ENCODE measurements at regions of chr17 and their contacts with region 1.

Region 1: GRCh38 chr17:6677158-6677831 is 25.7 kb downstream of the C17orf100 start:
- DNase-seq: peak in 3 of 5 donors; percentile 17 to 39 (median 21)
- H3K4me3 ChIP-seq: no peak overlapping the region
- H3K27ac ChIP-seq: no peak overlapping the region
- H3K4me1 ChIP-seq: no peaks in the 10 kb centered on the region
- H3K27me3 ChIP-seq: no peaks in the 10 kb centered on the region
- CTCF ChIP-seq: no peak

Region 2: DNA sequence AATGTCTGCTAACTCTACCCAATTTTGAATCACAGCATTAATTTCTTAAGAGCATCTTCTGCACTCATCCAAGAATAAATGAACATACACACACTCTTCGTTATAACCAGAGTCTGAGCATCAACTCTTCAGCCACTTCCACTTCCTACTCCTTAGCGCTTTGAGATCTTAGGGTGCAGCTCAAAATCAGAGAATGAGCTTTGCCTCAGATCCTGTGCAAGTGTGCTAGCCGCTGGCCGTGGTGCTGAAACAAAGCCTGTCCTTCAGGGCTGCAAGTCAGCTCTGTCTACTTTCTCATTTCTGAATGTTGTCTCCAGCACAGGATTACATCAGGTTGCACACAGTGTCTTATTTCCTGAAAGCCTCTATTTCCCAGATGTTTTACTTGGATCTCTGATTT is 407.8 kb before region 1 on chr17:
- intact Hi-C with region 1: no loop called
- DNase-seq: peak in 4 of 5 donors; percentile 64 to 90 (median 88)
- H3K4me3 ChIP-seq: no peak overlapping the region
- H3K27ac ChIP-seq: no peak overlapping the region
- H3K4me1 ChIP-seq: no peaks in the 10 kb centered on the region
- H3K27me3 ChIP-seq: no peaks in the 10 kb centered on the region
- CTCF ChIP-seq: no peak

Region 3: DNA sequence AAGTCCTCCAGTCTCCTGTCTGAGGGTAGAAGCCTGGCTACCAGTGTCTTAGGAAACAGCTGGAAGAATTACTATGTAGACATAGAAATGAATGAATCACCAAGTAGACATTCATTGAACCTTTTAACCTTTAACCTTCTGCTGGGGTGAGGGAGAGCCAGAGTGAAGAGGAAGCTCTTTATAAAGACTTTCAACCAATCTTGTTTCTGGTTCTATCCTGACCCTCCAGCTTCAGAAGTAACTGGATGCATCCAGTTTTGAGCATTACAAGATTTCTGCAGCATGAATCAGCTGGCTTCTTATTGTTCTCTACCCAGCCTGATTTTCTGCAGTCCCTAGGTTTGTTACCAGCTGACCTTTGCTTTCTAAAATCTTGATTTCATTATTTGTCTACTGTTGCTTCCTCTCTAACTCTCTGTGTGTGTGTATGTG is 145.7 kb after region 1 on chr17:
- intact Hi-C with region 1: loop called (anchors 10 kb)
- DNase-seq: no peak
- H3K4me3 ChIP-seq: no peak overlapping the region
- H3K27ac ChIP-seq: no peak overlapping the region
- H3K4me1 ChIP-seq: no peaks in the 10 kb centered on the region
- H3K27me3 ChIP-seq: no peaks in the 10 kb centered on the region
- CTCF ChIP-seq: no peak

Region 4: DNA sequence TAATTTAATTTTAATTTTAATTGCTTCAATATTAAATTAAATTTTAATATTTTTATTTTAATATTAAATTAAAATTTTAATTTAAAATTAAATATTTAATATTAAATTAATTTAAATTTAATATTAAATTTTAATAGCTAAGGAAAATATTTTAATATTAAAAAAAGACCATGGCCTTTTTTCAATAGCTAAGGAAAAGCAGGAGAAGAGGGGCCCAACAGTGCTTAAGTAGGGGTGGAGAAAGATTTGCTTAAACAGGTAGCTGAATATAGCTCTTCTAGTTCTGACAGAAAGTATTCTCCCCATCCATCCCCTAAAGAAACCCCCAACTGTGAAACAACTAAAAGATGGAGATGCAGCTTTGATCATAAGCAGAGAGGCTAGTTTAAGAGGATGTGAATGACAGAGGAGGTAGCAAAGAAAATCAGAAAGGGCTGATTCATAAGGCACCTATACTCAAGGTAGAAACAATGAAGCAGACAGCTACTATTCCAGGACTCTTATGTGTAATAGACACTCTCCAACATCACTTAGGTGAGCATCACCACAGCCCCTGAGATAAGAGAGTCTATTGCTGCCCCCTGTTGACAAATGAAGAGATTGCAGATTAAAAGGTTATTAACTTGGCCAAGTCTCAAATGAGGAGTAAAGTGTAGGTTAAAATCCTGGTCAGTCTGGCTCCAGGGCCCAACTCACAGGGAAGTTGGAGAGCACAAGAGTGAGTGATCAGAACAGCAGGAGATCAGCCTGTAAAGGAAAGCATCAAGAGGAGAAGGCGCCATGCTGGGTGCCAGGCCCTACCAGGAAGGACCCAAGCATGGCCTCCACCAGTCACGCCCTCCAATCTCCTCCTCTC is 327.3 kb after region 1 on chr17:
- intact Hi-C with region 1: loop called (anchors 10 kb)
- DNase-seq: peak in 3 of 5 donors; percentile 24 to 88 (median 83)
- H3K4me3 ChIP-seq: no peak overlapping the region
- H3K27ac ChIP-seq: no peak overlapping the region
- H3K4me1 ChIP-seq: peaks cover 0 to 3% (median 0%) of the 10 kb centered on the region in 3 donors
- H3K27me3 ChIP-seq: no peaks in the 10 kb centered on the region
- CTCF ChIP-seq: peak; percentile 70

Measured in kidney (tissue), 22 donors.